Activated naive CD4-positive, alpha-beta T cell treated with anti-CD3 and anti-CD28 coated beads for 36 hours (primary cell): ENCODE measurements at regions of chr1 and their contacts with region 1.

Region 1: DNA sequence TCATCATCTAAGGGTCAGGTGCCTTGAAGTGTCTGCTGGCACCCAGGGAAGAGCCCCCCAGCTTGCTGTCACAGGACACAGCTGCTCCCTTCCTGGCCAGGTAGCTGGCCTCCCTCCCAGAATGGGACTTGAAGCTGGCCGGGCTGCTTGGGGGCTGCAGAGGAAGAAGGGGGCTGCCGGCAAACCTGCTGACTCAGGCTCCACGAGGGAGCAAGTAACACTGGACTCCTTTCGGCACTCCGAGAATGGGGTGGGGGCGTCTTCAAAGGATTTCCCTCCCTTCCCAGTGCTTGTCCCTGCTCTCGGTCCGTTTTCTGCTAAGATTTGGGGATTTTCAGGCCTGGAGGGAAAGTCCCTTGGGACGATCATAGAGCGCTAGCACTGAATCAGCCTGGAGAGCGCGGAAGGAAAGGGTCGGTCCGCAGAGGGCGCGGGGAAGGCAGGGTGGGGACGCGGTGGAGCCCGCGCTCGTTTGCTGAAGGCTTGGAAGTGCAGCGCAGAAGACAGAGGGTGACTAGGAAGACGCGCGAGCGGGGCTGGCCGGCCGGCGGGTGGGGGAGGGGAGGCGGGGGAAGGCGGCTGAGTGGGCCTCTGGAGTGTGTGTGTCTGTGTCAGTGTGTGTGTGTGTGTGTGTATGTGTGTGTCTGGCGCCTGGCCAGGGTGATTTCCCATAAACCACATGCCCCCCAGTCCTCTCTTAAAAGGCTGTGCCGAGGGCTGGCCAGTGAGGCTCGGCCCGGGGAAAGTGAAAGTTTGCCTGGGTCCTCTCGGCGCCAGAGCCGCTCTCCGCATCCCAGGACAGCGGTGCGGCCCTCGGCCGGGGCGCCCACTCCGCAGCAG is at the start of gene CSF1:
- DNase-seq: peak; percentile 69
- H3K4me3 Mint-ChIP-seq: peak within 1 kb of the TSS; percentile 82
- H3K27ac Mint-ChIP-seq: peak within 1 kb of the TSS; percentile 81
- H3K4me1 Mint-ChIP-seq: peaks cover 53% of the 10 kb centered on the region
- H3K27me3 Mint-ChIP-seq: no peaks in the 10 kb centered on the region
- total RNA-seq, gene CSF1: 12.0 to 13.5 TPM

Region 2: DNA sequence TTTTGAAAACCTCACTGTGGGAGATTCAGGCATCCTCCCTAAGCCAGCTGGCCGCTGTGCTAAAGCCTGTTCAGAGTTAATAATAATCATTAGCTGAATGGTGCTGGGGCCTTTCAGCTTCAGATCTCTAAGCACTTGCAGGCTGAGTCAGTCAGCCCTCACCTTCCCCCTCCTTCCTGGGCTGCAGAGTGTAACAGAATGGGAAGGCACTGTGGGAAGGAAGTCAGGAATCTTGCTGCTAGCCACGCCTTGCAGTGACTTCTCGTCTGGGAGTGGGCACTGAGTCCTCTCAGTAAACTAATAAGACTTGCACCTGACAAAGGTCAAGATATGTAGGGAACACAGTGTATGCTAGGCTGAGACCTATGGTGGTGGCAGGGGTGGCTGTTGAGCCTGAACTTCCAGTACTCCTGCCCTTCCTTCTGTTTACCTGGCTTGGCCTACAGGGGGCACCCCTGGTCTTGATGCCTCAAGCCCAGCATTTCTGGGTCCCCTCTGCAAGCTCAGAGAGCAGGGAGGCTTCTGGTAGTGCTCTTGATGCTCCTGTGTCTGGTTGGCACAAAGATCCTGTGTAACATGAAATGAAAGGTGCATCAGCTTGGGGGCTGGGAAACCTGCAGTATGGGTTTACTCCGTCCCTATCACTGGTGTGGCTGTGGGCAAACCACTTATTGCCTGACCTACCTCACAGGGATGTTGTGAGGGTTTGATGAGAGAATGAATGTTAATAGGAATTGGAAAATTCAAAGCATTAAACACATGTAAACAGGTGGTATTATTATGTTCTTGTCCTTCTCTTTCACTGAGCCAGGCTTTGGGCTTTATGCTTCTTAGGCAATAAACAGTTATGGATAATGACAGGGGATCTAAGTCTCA is 410.4 kb before region 1 on chr1:
- CTCF ChIA-PET with region 1: no interaction called
- intact Hi-C with region 1: loop called (anchors 5 kb)
- DNase-seq: peak; percentile 73
- H3K4me3 Mint-ChIP-seq: no peak overlapping the region
- H3K27ac Mint-ChIP-seq: peak overlapping the region; percentile 81
- H3K4me1 Mint-ChIP-seq: peaks cover 91% of the 10 kb centered on the region
- H3K27me3 Mint-ChIP-seq: no peaks in the 10 kb centered on the region

Region 3: GRCh38 chr1:109790735-109791494 is 119.4 kb before region 1 on chr1:
- CTCF ChIA-PET with region 1: interaction called, 5 read pairs
- intact Hi-C with region 1: loop called (anchors 1 kb)
- DNase-seq: peak; percentile 91
- H3K4me3 Mint-ChIP-seq: no peak overlapping the region
- H3K27ac Mint-ChIP-seq: peak overlapping the region; percentile 81
- H3K4me1 Mint-ChIP-seq: peaks cover 57% of the 10 kb centered on the region
- H3K27me3 Mint-ChIP-seq: no peaks in the 10 kb centered on the region

Region 4: GRCh38 chr1:109802901-109803561 is 107.3 kb before region 1 on chr1:
- CTCF ChIA-PET with region 1: interaction called, 4 read pairs
- intact Hi-C with region 1: loop called (anchors 1 kb)
- DNase-seq: peak; percentile 29
- H3K4me3 Mint-ChIP-seq: peak overlapping the region; percentile 36
- H3K27ac Mint-ChIP-seq: peak overlapping the region; percentile 73
- H3K4me1 Mint-ChIP-seq: peaks cover 50% of the 10 kb centered on the region
- H3K27me3 Mint-ChIP-seq: no peaks in the 10 kb centered on the region

Region 5: GRCh38 chr1:109890115-109890953 is 20.0 kb before region 1 on chr1:
- CTCF ChIA-PET with region 1: interaction called, 3 read pairs
- intact Hi-C with region 1: loop called (anchors 1 kb)
- DNase-seq: peak; percentile 47
- H3K4me3 Mint-ChIP-seq: no peak overlapping the region
- H3K27ac Mint-ChIP-seq: no peak overlapping the region
- H3K4me1 Mint-ChIP-seq: peaks cover 19% of the 10 kb centered on the region
- H3K27me3 Mint-ChIP-seq: no peaks in the 10 kb centered on the region

Region 6: DNA sequence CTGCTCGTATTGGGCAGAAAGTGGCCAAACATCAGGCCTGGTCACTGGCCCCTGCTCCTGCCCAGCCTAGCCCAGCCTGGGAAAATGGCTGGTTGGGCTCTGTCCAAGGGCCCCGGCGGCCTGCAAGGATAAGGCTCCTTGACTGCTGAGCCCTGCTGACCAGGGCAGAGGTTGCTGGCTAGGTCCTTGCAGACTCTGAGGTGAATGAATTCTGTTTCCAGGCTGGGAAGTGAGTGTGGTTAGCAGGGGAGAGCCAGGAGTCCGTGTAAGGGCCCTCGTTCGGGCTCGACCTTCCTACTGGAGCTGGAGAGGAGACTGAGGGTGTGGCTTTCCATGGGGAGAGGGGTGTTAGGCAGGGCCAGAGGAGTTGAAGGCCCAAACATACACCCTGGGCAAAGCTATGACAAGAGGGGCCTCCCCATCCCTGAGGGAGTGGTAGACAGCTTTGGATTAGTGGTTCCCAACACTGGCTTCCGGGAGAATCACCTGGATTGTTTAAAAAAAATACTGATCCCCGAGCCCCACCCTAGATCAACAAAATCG is 20.9 kb after region 1 on chr1:
- CTCF ChIA-PET with region 1: no interaction called
- intact Hi-C with region 1: no loop called
- DNase-seq: no peak
- H3K4me3 Mint-ChIP-seq: no peak overlapping the region
- H3K27ac Mint-ChIP-seq: no peak overlapping the region
- H3K4me1 Mint-ChIP-seq: peaks cover 2% of the 10 kb centered on the region
- H3K27me3 Mint-ChIP-seq: no peaks in the 10 kb centered on the region

Region 7: GRCh38 chr1:110048923-110049601 is 138.7 kb after region 1 on chr1:
- CTCF ChIA-PET with region 1: no interaction called
- intact Hi-C with region 1: no loop called
- DNase-seq: no peak
- H3K4me3 Mint-ChIP-seq: no peak overlapping the region
- H3K27ac Mint-ChIP-seq: no peak overlapping the region
- H3K4me1 Mint-ChIP-seq: no peaks in the 10 kb centered on the region
- H3K27me3 Mint-ChIP-seq: no peaks in the 10 kb centered on the region